Activated CD8-positive, alpha-beta T cell treated with anti-CD3 and anti-CD28 coated beads for 36 hours (primary cell): ENCODE measurements at regions of chr17 and their contacts with region 1.

Region 1: DNA sequence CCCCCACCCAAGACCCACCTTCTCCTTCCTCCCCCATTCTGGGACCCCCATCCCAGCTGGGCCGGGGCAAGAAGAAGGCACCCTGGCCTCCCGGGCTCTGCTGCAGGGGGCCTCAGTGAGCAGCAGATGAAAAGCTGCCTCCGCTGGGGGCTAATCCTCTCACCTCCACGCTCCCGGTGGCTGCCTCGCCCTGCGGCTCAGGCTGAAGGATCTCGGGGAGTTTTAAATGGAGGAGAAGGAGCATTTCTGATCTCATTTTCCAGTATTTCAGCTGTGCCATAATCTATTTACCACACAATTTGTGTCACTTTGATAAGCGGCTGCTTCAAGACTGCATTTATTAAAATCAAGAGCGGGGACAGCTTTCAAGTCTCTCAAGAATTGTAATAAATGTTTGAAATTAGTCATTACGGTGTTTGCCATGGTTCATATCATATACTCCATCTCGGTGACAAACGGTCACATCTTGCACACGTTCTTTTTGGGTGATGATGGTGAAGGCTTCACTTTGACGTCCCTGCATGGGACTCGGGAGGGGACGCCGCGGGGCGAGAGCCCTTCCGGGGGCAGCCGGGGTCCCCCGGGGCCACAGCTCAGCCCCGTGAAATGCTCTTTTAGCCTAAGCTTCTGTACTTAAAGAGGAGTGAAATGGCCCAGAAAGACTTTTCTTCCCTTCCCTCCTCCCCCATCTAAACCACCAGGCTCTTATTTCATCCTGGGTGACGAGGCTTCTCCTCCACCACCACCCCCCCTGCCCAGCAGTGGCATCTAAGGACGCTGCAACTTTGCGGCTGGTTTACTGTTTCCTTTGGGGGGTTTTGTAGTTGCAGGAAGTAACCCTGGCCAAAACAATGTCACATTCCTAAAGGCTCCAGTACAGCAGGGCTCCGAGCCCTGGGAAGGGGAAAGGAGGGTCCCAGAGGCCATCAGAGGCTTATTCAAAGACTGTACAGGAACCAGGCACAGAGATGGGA is 313.1 kb upstream of the TNRC6C start:
- DNase-seq: peak; percentile 86
- ATAC-seq: peak; percentile 78
- H3K4me3 Mint-ChIP-seq: peak overlapping the region; percentile 56
- H3K27ac Mint-ChIP-seq: peak overlapping the region; percentile 94
- H3K4me1 Mint-ChIP-seq: peaks cover 32% of the 10 kb centered on the region
- H3K27me3 Mint-ChIP-seq: no peaks in the 10 kb centered on the region
- CTCF ChIP-seq: peak; percentile 56

Region 2: DNA sequence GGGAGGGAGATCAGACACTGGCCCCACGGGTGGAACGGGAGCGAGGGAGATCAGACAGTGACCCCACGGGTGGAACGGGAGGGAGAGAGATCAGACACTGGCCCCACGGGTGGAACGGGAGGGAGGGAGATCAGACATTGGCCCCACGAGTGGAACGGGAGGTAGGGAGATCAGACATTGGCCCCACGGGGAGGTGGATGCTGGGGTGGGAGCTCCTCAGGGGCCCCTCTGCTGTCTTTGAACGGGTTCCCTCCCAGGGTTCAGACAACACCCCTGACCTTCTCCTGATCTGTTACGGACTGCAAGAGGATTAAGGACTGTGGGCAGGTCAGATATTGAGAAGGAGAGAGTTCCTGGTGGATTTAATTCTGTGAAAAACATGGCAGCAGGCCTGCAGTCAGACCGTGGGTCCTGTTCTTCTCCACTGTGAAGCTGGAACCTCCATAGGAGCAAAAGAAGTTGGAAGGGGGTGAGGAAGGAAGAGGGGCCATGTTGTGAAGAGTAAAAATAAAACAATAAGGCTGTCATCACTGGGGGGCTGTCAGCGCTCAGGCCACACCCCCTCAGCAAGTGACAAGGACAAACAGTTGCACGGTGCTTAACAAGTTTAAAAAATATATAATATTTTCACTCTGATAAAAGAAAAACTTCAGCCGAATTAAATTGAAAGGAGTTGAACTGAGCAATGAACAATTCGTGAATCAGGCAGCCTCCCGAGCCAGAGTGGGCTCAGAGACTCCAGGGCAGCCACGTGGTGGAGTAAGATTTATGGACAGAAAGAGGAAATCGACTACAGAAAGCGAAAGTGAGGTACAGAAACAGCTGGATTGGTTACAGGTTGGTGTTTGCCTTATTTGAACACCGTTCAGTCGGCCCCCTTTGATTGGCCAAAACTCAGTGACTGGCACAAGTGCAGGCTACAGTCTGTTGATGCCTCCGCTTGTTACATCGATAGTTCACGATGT is 35.5 kb before region 1 on chr17:
- CTCF ChIA-PET with region 1: interaction called, 4 read pairs
- POLR2A ChIA-PET with region 1: interaction called, 10 read pairs
- intact Hi-C with region 1: no loop called
- DNase-seq: peak; percentile 85
- ATAC-seq: peak; percentile 97
- H3K4me3 Mint-ChIP-seq: peak overlapping the region; percentile 63
- H3K27ac Mint-ChIP-seq: peak overlapping the region; percentile 92
- H3K4me1 Mint-ChIP-seq: peaks cover 26% of the 10 kb centered on the region
- H3K27me3 Mint-ChIP-seq: no peaks in the 10 kb centered on the region
- CTCF ChIP-seq: no peak

Region 3: DNA sequence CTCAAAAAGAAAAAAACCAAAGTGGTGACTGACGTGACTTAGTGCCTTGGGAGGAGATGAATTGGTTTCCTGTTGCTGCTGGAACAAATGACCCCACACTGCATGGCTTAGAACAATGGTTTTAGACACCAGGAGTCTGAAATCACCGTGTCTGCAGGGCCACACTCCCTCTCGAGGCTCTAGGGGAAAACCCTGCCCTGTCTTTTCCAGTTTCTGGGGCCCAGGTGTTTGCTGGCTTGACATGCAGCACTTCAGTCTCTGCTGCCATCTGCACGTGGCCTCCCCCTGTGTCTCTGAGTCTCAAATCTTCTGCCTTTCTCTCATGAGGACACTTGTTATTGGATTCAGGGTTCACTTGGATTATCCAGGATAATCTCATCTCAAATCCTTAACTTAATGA is 10.6 kb before region 1 on chr17:
- CTCF ChIA-PET with region 1: interaction called, 11 read pairs
- POLR2A ChIA-PET with region 1: interaction called, 12 read pairs
- intact Hi-C with region 1: no loop called
- DNase-seq: peak; percentile 86
- ATAC-seq: peak; percentile 98
- H3K4me3 Mint-ChIP-seq: no peak overlapping the region
- H3K27ac Mint-ChIP-seq: peak overlapping the region; percentile 92
- H3K4me1 Mint-ChIP-seq: peaks cover 22% of the 10 kb centered on the region
- H3K27me3 Mint-ChIP-seq: peaks cover 4% of the 10 kb centered on the region
- CTCF ChIP-seq: no peak

Region 4: DNA sequence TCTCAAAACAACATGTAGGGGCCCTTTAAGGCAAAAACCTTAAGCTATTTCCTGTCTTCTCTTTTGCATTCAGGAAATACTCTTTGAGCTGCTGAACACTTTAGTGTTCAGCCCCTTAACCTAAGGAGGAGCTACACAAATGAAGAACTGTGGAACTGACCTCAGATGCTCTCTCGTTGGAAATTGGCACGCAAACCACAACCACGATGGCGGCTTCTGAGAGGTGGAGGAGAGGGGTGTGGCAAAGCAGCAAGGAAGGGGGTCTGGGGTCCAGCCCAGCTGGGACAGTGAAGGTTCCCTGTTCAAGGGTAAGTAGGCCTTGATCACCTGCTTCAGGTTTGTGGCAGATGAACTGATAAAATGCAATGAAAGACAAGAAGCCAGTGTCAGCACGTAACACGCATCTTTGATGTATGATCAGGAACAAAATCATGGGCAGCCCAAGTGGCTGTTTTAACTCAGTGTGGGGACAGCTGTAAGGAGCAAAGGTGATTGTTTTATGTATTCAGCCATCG is 21.6 kb after region 1 on chr17:
- CTCF ChIA-PET with region 1: interaction called, 15 read pairs
- POLR2A ChIA-PET with region 1: interaction called, 19 read pairs
- intact Hi-C with region 1: no loop called
- DNase-seq: peak; percentile 91
- ATAC-seq: peak; percentile 90
- H3K4me3 Mint-ChIP-seq: peak overlapping the region; percentile 83
- H3K27ac Mint-ChIP-seq: peak overlapping the region; percentile 96
- H3K4me1 Mint-ChIP-seq: peaks cover 45% of the 10 kb centered on the region
- H3K27me3 Mint-ChIP-seq: no peaks in the 10 kb centered on the region
- CTCF ChIP-seq: no peak

Region 5: DNA sequence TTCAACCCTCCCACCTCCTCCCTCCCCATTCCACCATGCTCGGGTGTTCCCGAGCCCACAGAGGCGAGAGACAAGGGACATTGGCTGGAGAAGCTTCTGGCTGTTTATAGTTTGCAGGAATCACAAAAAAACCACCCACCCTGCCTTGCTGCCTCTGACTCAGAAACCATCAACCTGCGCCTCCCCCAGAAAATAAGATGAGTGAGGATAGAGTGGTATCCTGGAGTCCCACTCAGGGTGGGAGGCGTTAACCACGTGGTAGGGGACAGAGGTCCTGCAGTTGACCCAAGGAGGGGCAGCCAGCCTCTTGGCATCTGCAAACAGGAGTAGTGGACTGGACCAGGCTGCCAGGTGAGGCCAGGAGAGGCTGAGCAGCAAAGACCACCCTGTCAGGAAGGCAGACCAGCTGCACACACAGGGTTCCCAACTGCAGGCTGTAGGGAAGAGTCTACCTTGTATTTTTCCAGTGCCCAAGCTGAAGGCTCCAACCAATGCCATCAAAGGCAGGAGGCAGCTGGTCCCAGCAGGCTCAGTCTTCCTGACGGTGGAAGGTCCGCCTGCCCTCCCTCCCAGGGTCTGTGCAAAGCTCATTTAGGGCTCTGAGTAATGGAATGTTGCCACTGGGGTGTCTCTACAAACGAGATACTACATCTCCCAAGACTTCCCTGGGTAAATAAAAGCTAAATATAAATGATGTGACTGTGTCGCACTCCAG is 111.6 kb after region 1 on chr17:
- CTCF ChIA-PET with region 1: no interaction called
- POLR2A ChIA-PET with region 1: no interaction called
- intact Hi-C with region 1: no loop called
- DNase-seq: no peak
- ATAC-seq: no peak
- H3K4me3 Mint-ChIP-seq: no peak overlapping the region
- H3K27ac Mint-ChIP-seq: no peak overlapping the region
- H3K4me1 Mint-ChIP-seq: no peaks in the 10 kb centered on the region
- H3K27me3 Mint-ChIP-seq: no peaks in the 10 kb centered on the region
- CTCF ChIP-seq: no peak

Region 6: GRCh38 chr17:77957857-77958715 is 312.7 kb after region 1 on chr17 and contains the start of gene TNRC6C:
- CTCF ChIA-PET with region 1: no interaction called
- POLR2A ChIA-PET with region 1: interaction called, 11 read pairs
- intact Hi-C with region 1: no loop called
- DNase-seq: peak; percentile 100
- ATAC-seq: peak; percentile 92
- H3K4me3 Mint-ChIP-seq: peak within 1 kb of the TSS; percentile 85
- H3K27ac Mint-ChIP-seq: peak within 1 kb of the TSS; percentile 90
- H3K4me1 Mint-ChIP-seq: peaks cover 34% of the 10 kb centered on the region
- H3K27me3 Mint-ChIP-seq: peaks cover 7% of the 10 kb centered on the region
- CTCF ChIP-seq: no peak
- total RNA-seq, gene TNRC6C: 26.4 to 26.6 TPM